Astrocyte of the cerebellum (primary cell): ENCODE measurements at regions of chr5 and their contacts with region 1.

Region 1: GRCh38 chr5:1315709-1316587 is 21.1 kb upstream of the TERT start:
- DNase-seq: no peak
- H3K4me3 ChIP-seq: no peak overlapping the region
- CTCF ChIP-seq: no peak

Region 2: DNA sequence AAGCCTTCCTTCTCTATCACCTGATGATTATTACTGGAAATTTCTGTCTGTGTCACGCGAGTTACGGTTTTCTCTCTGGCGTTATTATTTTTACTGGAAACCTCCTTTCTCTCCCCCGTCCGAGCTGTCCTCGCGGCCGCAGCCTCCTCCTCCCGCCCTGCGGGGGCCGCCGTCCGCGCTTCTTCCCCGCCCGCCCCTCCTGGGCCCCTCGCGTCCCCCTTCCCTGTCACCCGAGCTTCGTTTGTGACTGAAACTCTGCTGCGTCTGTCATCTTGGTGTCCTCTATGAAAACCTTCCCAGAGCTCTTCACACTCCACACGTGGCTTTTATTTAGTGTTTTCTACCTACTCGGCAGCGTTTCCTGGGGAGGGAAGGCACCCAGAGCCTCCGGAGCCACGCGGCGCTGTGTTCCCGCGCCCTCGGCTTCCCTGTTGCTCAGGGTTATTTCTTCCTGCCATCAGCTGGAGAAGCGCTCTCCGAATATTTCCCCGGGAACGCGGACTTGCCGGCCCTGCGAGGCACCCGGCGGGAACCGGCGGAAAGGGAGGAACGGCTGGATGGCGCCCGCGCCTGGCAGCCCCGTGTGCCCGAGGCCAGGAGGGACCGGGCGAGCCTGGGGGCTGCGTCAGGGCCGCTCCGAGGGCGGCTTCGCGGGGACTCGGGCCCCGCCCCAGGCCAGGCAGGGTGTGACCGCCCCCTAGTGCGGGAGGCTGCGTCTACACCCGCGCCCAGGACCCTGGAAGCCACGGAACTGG is 389.4 kb before region 1 on chr5:
- in situ Hi-C with region 1: loop called (anchors 25 kb)
- DNase-seq: no peak
- H3K4me3 ChIP-seq: peak overlapping the region; percentile 18
- CTCF ChIP-seq: peak; percentile 36

Region 3: DNA sequence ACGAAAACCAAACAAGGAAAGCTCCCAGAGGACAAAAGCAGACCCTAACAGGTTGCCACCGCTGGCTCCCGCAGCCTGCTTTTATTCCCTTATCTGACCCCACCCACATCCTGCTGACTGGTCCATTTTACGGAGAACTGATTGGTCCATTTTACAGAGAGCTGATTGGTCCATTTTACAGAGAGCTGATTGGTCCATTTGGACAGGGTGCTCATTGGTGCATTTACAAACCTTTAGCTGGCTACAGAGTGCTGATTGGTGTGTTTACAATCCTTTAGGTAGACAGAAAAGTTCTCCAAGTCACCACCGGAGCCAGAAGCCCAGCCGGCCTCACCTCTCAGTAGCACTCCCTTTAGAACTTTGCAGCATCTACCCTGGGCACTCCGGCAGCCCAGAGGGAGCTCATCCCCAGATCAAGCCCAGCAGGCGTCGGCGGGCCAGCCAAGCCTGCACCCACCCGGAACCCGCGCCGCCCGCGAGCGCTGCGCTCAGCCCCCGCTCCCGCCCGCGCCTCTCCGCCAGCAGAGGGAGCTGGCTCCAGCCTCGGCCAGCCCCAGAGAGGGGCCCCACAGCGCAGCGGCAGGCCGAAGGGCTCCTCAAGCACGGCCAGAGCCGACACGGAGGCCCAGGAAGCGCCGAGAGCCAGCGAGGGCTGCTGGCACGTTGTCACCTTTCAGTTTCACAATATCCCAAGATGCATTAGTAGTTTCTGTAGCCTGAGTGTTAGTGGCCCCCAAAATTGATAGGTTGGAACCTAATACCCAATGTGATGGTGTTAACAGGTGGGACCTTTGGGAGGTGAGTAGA is 64.3 kb after region 1 on chr5:
- in situ Hi-C with region 1: loop called (anchors 5 kb)
- DNase-seq: no peak
- H3K4me3 ChIP-seq: no peak overlapping the region
- CTCF ChIP-seq: peak; percentile 29

Region 4: GRCh38 chr5:1409381-1410110 is 93.6 kb after region 1 on chr5:
- in situ Hi-C with region 1: loop called (anchors 5 kb)
- DNase-seq: no peak
- H3K4me3 ChIP-seq: no peak overlapping the region
- CTCF ChIP-seq: no peak